T-cell (primary cell): ENCODE measurements at regions of chr10 and their contacts with region 1.

Region 1: GRCh38 chr10:12375076-12375504 is 25.7 kb downstream of the CAMK1D start:
- DNase-seq: no peak
- ATAC-seq: no peak
- H3K4me3 ChIP-seq: no peak overlapping the region
- H3K4me3 Mint-ChIP-seq: no peak overlapping the region
- H3K27ac ChIP-seq: no peak overlapping the region
- H3K27ac Mint-ChIP-seq: no peak overlapping the region
- H3K4me1 ChIP-seq: no peaks in the 10 kb centered on the region
- H3K4me1 Mint-ChIP-seq: peaks cover 6 to 15% (median 8%) of the 10 kb centered on the region in 3 donors
- H3K27me3 ChIP-seq: no peaks in the 10 kb centered on the region
- H3K27me3 Mint-ChIP-seq: no peaks in the 10 kb centered on the region

Region 2: GRCh38 chr10:12299222-12299965 is 75.7 kb before region 1 on chr10:
- CTCF ChIA-PET with region 1: interaction called in 1 of 2 experiments, 13 read pairs
- POLR2A ChIA-PET with region 1: no interaction called
- DNase-seq: no peak
- ATAC-seq: no peak
- H3K4me3 ChIP-seq: no peak overlapping the region
- H3K4me3 Mint-ChIP-seq: no peak overlapping the region
- H3K27ac ChIP-seq: no peak overlapping the region
- H3K27ac Mint-ChIP-seq: no peak overlapping the region
- H3K4me1 ChIP-seq: no peaks in the 10 kb centered on the region
- H3K4me1 Mint-ChIP-seq: no peaks in the 10 kb centered on the region
- H3K27me3 ChIP-seq: no peaks in the 10 kb centered on the region
- H3K27me3 Mint-ChIP-seq: no peaks in the 10 kb centered on the region